T-cell (primary cell): ENCODE measurements at regions of chr10 and their contacts with region 1.

Region 1: GRCh38 chr10:123262456-123262855 is 108.3 kb downstream of the BUB3 start:
- DNase-seq: no peak
- ATAC-seq: no peak
- H3K4me3 ChIP-seq: no peak overlapping the region
- H3K4me3 Mint-ChIP-seq: no peak overlapping the region
- H3K27ac ChIP-seq: no peak overlapping the region
- H3K27ac Mint-ChIP-seq: no peak overlapping the region
- H3K4me1 ChIP-seq: no peaks in the 10 kb centered on the region
- H3K4me1 Mint-ChIP-seq: no peaks in the 10 kb centered on the region
- H3K27me3 ChIP-seq: no peaks in the 10 kb centered on the region
- H3K27me3 Mint-ChIP-seq: peaks cover 0 to 2% of the 10 kb centered on the region in 2 donors

Region 2: GRCh38 chr10:123129618-123130271 is 132.7 kb before region 1 on chr10:
- CTCF ChIA-PET with region 1: no interaction called
- POLR2A ChIA-PET with region 1: no interaction called
- DNase-seq: no peak
- ATAC-seq: no peak
- H3K4me3 ChIP-seq: no peak overlapping the region
- H3K4me3 Mint-ChIP-seq: no peak overlapping the region
- H3K27ac ChIP-seq: no peak overlapping the region
- H3K27ac Mint-ChIP-seq: no peak overlapping the region
- H3K4me1 ChIP-seq: peaks cover 3 to 23% of the 10 kb centered on the region in 2 experiments
- H3K4me1 Mint-ChIP-seq: peaks cover 22 to 24% (median 23%) of the 10 kb centered on the region in 3 donors
- H3K27me3 ChIP-seq: peaks cover 22 to 47% of the 10 kb centered on the region in 2 experiments
- H3K27me3 Mint-ChIP-seq: peaks cover 77 to 84% of the 10 kb centered on the region in 2 donors

Region 3: DNA sequence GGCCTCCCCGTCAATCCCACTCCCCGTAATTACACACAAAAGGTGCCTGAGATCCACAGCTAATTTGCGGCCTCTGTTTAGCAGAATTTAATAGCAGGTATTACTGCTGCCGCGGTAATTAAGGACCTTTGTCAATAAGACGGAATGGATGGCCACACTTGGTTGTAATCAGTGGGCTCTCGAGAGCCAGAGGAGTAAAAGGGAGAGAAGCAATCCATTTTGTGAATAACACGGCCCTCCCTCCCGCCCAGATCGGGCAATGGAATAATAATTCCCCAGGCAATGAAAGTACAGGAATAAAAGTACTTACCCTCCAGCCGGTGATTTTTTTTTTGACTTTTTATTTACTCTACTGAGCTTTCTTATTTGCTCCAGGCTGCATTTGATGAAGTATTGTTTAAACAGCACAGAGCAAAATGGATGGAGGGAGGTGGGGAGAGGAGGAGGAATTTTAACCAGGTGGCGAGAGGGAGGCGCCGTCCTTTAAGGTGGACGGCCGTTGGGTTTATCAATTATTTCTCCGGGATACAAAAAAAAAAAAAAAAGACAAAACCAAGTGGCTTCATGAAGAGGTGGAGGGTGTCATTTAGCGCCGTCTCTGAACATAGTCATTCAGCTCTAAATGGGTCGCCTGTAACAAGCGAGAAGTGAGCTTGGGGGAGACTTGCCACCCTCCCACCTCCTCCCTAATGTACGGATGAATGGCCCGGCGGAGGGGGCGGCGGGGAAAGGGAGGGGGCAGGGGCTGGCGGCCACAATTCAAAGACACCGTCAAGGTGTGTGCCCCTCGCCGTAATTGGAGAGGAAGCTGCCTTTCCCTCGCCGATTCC is 12.1 kb after region 1 on chr10:
- CTCF ChIA-PET with region 1: no interaction called
- POLR2A ChIA-PET with region 1: interaction called in 1 of 2 experiments, 10 read pairs
- DNase-seq: no peak
- ATAC-seq: no peak
- H3K4me3 ChIP-seq: no peak overlapping the region
- H3K4me3 Mint-ChIP-seq: no peak overlapping the region
- H3K27ac ChIP-seq: no peak overlapping the region
- H3K27ac Mint-ChIP-seq: no peak overlapping the region
- H3K4me1 ChIP-seq: no peaks in the 10 kb centered on the region
- H3K4me1 Mint-ChIP-seq: peaks cover 0 to 5% (median 4%) of the 10 kb centered on the region in 3 donors
- H3K27me3 ChIP-seq: peaks cover 7 to 12% of the 10 kb centered on the region in 2 experiments
- H3K27me3 Mint-ChIP-seq: peaks cover 25 to 30% of the 10 kb centered on the region in 2 donors